ENCODE measurements at regions of chr20 and their contacts with region 1.

Region 1: DNA sequence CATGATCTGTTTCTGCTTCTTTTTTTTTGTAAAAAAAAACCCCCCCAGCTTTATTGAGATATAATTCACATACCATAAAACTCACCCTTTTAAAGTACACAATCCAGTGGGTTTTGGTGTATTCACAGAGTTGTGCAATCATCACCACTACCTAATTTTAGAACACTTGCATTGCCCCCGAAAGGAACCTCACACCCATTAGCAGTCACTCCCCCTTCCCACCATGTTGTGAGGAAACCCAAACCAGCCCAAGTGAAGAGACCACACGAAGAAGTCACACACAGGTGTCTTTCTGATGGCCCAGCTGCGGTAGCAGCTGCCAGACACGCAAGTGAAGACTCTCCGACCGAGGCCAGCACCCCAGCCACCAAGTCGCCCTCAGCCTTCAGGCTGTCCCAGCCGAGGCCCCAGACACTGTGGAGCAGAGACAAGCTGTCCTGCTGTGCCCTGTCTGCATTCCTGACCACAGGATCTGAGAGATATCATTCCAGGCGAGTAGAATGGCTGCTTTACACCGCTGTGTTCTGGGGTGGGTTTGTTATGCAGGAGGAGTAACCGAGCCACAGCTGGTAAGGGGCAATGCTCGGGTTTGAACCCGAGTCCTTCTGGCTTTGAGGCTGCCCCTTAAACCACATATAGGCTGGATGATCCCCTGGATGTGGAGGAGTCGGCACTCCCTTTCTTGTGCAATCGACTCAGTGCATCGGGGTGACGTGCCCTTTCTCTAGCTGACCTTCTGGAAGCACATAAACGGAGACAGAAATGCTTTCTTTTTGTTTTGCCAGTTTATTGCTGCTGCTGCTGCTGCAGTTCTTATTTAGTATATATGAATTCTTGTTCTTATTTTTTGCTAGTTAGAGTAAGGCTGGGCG is 59.1 kb upstream of the PTPN1 start:
- DNase-seq: peak; percentile 70 to 90 (median 81)
- H3K4me3 ChIP-seq: peak overlapping the region; percentile 22 to 71 (median 28)
- H3K4me3 Mint-ChIP-seq: peak overlapping the region; percentile 82 to 88
- H3K27ac ChIP-seq: peak overlapping the region; percentile 73 to 87
- H3K27ac Mint-ChIP-seq: peak overlapping the region; percentile 80 to 98 (median 91)
- H3K4me1 ChIP-seq: peaks cover 55 to 57% of the 10 kb centered on the region in 2 donors
- H3K4me1 Mint-ChIP-seq: peaks cover 74% of the 10 kb centered on the region
- H3K27me3 ChIP-seq: no peaks in the 10 kb centered on the region
- H3K27me3 Mint-ChIP-seq: peaks cover 0 to 4% (median 2%) of the 10 kb centered on the region in 3 donors
- CTCF ChIP-seq: no peak

Region 2: GRCh38 chr20:50346372-50347283 is 104.5 kb before region 1 on chr20:
- intact Hi-C with region 1: loop called in 1 of 2 experiments (anchors 5 kb)
- DNase-seq: peak; percentile 47 to 58 (median 51)
- H3K4me3 ChIP-seq: peak overlapping the region in 1 of 3 experiments; percentile 51
- H3K4me3 Mint-ChIP-seq: peak overlapping the region; percentile 67 to 84
- H3K27ac ChIP-seq: peak overlapping the region; percentile 84 to 94
- H3K27ac Mint-ChIP-seq: peak overlapping the region; percentile 97 to 99 (median 98)
- H3K4me1 ChIP-seq: peaks cover 76 to 82% of the 10 kb centered on the region in 2 donors
- H3K4me1 Mint-ChIP-seq: peaks cover 78% of the 10 kb centered on the region
- H3K27me3 ChIP-seq: no peaks in the 10 kb centered on the region
- H3K27me3 Mint-ChIP-seq: peaks cover 1 to 6% (median 4%) of the 10 kb centered on the region in 3 donors
- CTCF ChIP-seq: no peak

Region 3: DNA sequence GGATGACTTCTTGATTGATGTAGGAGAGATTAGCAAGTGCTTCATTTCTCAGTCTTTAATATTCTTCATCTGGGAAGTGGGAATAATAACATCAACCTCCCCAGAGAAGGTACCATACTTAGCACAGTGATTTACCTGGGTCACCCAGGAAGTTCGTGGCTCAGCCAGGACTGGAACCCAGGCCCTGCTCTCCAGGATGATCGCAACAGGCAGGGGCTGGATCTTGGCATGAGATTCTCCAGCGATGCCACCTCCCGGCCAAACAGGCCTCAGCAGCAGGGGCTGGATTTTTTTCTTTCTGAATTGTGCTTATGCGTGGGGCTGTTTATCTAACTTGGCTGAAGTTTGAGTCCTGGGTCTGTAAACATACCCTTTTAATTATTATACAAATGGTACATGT is 70.5 kb before region 1 on chr20:
- intact Hi-C with region 1: loop called in 1 of 2 experiments (anchors 10 kb)
- DNase-seq: no peak
- H3K4me3 ChIP-seq: no peak overlapping the region
- H3K4me3 Mint-ChIP-seq: no peak overlapping the region
- H3K27ac ChIP-seq: no peak overlapping the region
- H3K27ac Mint-ChIP-seq: peak overlapping the region in 3 of 7 donors; percentile 38 to 87 (median 65)
- H3K4me1 ChIP-seq: peaks cover 57 to 69% of the 10 kb centered on the region in 2 donors
- H3K4me1 Mint-ChIP-seq: peaks cover 75% of the 10 kb centered on the region
- H3K27me3 ChIP-seq: no peaks in the 10 kb centered on the region
- H3K27me3 Mint-ChIP-seq: peaks cover 1 to 7% (median 5%) of the 10 kb centered on the region in 3 donors
- CTCF ChIP-seq: no peak

Region 4: DNA sequence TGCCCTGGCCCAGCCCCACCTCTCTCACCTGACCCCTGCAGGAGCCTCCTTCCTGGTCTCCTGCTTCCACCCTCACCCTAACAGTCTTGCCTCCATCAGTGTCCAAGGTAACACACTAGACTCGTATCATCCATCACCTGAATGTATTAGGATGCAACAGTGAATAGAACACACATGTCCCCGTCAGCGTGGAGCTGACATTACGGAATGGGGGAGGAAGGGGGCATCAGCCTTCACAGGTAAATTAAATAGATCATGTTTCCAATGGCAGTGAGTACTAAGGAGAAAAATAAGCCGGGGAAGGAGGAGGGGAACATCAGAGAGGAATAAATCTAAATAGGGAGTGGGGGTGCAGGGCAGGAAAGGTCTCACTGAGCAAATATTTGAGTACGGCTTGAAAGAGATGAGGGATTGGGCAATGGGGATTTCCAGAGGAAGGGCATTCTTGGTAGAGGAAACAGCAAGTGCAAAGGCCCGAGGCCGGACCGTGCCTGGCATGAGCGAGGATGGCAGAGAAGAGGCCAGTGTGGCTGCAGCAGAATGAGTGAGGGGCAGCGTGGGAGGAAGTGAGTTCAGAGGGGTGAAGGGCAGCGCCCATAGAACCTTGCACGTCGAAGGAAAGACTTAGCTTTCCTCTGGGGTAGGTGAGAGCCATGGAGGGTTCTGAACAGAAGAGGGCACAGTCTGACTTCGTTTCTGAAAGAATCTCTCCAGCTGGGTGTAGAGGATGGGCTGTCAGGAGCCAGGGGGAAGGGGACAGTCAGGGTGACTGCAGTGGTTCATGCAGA is 51.0 kb before region 1 on chr20:
- intact Hi-C with region 1: loop called in 1 of 2 experiments (anchors 10 kb)
- DNase-seq: peak; percentile 70 to 89 (median 78)
- H3K4me3 ChIP-seq: peak overlapping the region in 1 of 3 experiments; percentile 36
- H3K4me3 Mint-ChIP-seq: peak overlapping the region; percentile 3 to 48
- H3K27ac ChIP-seq: peak overlapping the region in 1 of 2 donors; percentile 29
- H3K27ac Mint-ChIP-seq: peak overlapping the region; percentile 57 to 88 (median 79)
- H3K4me1 ChIP-seq: peaks cover 25 to 34% of the 10 kb centered on the region in 2 donors
- H3K4me1 Mint-ChIP-seq: peaks cover 33% of the 10 kb centered on the region
- H3K27me3 ChIP-seq: no peaks in the 10 kb centered on the region
- H3K27me3 Mint-ChIP-seq: peaks cover 0 to 5% (median 4%) of the 10 kb centered on the region in 3 donors
- CTCF ChIP-seq: no peak

Region 5: DNA sequence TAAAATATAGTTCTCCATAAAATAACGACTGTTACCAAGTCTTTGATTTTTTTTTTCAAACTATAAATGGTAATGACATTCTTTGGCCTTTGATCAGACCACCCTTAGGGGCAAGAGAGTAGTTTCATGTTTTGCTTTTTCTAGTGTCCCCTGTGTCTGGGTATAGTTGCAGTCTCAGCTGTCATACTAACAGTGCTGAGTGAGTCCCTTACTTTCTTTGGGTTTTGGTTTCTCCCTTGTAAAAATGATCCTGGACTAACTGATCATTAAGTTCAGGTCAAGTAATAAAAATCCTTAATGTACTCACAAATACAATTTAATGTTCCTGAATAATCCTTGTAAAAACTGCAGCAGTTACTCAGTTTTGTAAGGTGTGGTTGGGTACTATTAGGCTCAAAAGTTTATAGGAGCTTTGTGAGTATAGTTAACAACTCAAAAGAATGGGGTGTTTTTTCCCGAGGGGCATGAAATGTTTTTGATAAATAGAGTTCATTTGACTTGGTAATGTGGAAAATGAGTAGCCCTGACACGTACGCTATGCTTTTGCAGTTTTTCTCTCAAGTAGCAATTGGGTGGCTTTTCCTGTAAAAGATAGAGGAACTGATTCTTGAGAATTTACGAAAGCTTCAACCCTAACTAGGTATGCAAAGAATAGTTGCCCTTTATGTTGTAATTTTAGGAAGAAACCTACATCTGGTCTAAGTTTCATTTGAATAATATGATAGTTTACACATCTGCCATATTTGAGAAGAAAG is 65.2 kb after region 1 on chr20:
- intact Hi-C with region 1: no loop called
- DNase-seq: peak; percentile 58 to 81 (median 78)
- H3K4me3 ChIP-seq: peak overlapping the region in 1 of 3 experiments; percentile 52
- H3K4me3 Mint-ChIP-seq: peak overlapping the region in 1 of 2 donors; percentile 75
- H3K27ac ChIP-seq: peak overlapping the region; percentile 1 to 88
- H3K27ac Mint-ChIP-seq: peak overlapping the region; percentile 88 to 97 (median 90)
- H3K4me1 ChIP-seq: peaks cover 96 to 100% of the 10 kb centered on the region in 2 donors
- H3K4me1 Mint-ChIP-seq: peaks cover 96% of the 10 kb centered on the region
- H3K27me3 ChIP-seq: no peaks in the 10 kb centered on the region
- H3K27me3 Mint-ChIP-seq: no peaks in the 10 kb centered on the region
- CTCF ChIP-seq: no peak